HCT116 (cell line): ENCODE measurements at regions of chr4 and their contacts with region 1.

Region 1: GRCh38 chr4:128220286-128221235 is 67.1 kb downstream of the PGRMC2 start:
- DNase-seq: peak; percentile 36
- ATAC-seq: peak; percentile 89
- H3K4me3 ChIP-seq: no peak overlapping the region
- H3K27ac ChIP-seq: no peak overlapping the region
- H3K4me1 ChIP-seq: peaks cover 5 to 7% of the 10 kb centered on the region in 2 experiments; a peak in 3 of 4 replicates
- H3K27me3 ChIP-seq: no peaks in the 10 kb centered on the region
- CTCF ChIP-seq: peak; percentile 24 to 54 (median 52); a peak in 4 of 6 replicates
- POLR2A ChIP-seq: no peak
- RAD21 ChIP-seq: peak; percentile 70

Region 2: GRCh38 chr4:128068935-128069334 is 151.6 kb before region 1 on chr4:
- CTCF ChIA-PET with region 1: interaction called, 19 read pairs
- POLR2A ChIA-PET with region 1: no interaction called
- RAD21 ChIA-PET with region 1: no interaction called
- intact Hi-C with region 1: loop called (anchors 2 kb)
- DNase-seq: peak; percentile 48
- ATAC-seq: peak; percentile 99
- H3K4me3 ChIP-seq: no peak overlapping the region
- H3K27ac ChIP-seq: no peak overlapping the region
- H3K4me1 ChIP-seq: no peaks in the 10 kb centered on the region
- H3K27me3 ChIP-seq: no peaks in the 10 kb centered on the region
- CTCF ChIP-seq: peak; percentile 16 to 63 (median 56); a peak in 4 of 6 replicates
- POLR2A ChIP-seq: no peak
- RAD21 ChIP-seq: peak; percentile 36; the same call in 1 of the 2 replicates